GM13976 (cell line): ENCODE measurements at regions of chr5 and their contacts with region 1.

Region 1: GRCh38 chr5:119452373-119453039 is at the start of gene HSD17B4:
- DNase-seq: peak; percentile 85
- CTCF ChIP-seq: no peak

Region 2: DNA sequence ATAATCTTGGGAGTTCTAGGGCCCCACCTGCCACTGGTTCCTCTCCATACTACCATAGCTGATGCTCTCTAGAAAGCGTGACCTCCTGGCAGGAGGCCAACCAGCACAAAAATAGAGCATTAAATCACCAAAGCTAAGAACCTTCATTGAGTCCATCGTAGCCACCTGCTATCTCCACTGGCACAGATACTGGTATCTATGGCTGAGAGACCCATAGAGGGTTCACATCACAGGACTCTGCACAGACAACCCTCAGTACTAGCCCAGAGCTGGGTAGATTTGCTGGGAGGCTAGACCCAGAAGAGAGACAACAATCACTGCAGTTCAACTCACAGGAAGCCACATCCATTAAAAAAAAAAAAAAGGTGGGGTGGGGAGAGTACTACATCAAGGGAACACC is 973.2 kb before region 1 on chr5:
- in situ Hi-C with region 1: no loop called
- DNase-seq: no peak
- CTCF ChIP-seq: no peak

Region 3: GRCh38 chr5:120457839-120458507 is 1005.5 kb after region 1 on chr5:
- in situ Hi-C with region 1: loop called (anchors 25 kb)
- DNase-seq: peak; percentile 42
- CTCF ChIP-seq: peak; percentile 56

Region 4: DNA sequence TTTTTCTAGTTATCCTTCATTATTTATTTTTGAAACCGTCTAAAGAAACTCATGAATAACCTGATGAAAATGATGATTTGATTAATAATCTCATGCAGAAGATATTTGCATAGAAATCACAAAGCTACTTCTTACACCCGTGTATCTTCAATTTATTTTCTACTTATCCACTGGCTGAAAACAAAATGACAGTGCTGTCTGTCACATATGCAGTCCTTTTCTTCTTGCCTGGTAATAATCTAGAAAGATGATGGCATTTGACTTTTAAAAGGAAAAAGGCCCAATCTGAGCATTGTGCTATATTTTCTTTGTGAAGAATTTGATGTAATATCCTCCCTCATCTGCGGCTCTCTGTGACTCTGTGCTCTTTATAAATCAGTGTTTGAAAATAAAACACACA is 1264.9 kb after region 1 on chr5:
- in situ Hi-C with region 1: no loop called
- DNase-seq: no peak
- CTCF ChIP-seq: no peak